ENCODE measurements at regions of chr2 and their contacts with region 1.

Region 1: GRCh38 chr2:84881581-84882414 is 914 bp upstream of the TRABD2A start:
- DNase-seq: peak; percentile 69 to 89 (median 85)
- ATAC-seq: peak; percentile 80
- H3K4me3 ChIP-seq: peak overlapping the region; percentile 80
- H3K4me3 Mint-ChIP-seq: peak overlapping the region; percentile 84 to 99 (median 97)
- H3K27ac ChIP-seq: peak overlapping the region; percentile 89
- H3K27ac Mint-ChIP-seq: peak overlapping the region; percentile 92 to 99 (median 98)
- H3K4me1 ChIP-seq: peaks cover 5 to 20% of the 10 kb centered on the region in 2 donors
- H3K4me1 Mint-ChIP-seq: peaks cover 35 to 65% (median 61%) of the 10 kb centered on the region in 7 donors
- H3K27me3 ChIP-seq: no peaks in the 10 kb centered on the region
- H3K27me3 Mint-ChIP-seq: peaks cover 0 to 3% (median 0%) of the 10 kb centered on the region in 5 donors

Region 2: DNA sequence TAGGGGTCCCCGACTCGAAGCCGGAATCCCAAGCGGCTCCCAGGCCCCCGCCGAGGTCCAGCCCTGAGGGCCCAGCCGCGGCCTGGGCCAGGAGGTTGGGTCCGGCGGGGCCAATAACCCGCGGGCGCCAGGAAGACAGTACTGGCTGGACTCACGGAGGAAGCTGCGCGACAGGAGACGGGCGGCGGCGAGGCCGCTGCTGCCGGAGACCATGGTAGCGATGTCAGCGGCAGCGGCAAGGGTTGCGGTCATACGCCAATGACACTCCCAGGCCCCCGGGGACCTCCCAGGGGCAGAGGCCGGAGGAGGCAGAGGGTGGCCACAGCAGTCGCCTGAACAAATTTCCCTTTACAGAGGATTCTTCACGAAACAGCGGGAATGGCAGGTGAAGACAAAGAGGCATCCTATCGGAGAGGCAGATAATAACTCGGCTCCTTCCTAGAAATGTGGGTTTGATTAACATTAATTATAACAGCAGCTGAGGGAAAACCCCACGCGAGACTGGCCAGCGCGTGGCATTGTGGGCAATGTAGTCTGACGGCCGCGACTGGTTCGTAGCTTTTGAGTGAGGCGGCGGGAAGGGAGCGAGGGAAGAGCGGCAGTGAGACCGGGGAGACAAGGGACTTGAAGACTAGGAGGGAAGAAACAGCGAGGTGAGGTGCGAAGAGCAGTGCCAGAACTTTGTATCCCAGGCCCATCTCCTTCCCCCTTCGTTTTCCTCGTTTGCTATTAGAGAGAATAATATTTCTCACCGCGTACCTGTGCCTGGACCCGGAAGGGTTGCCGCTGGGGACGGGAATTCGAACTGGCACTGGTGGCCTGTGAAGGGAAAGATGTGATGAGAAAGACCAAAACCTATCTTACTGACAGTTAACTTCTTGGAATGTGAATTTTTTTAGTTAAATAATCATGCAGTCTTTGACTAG is 422.5 kb before region 1 on chr2 and contains the start of gene SUCLG1:
- CTCF ChIA-PET with region 1: no interaction called
- POLR2A ChIA-PET with region 1: interaction called, 3 read pairs
- intact Hi-C with region 1: loop called (anchors 1 to 2 kb)
- DNase-seq: peak; percentile 72 to 88 (median 84)
- ATAC-seq: peak; percentile 98
- H3K4me3 ChIP-seq: peak within 1 kb of the TSS; percentile 69
- H3K4me3 Mint-ChIP-seq: peak within 1 kb of the TSS; percentile 90 to 100 (median 96)
- H3K27ac ChIP-seq: peak within 1 kb of the TSS; percentile 94
- H3K27ac Mint-ChIP-seq: peak within 1 kb of the TSS; percentile 91 to 99 (median 99)
- H3K4me1 ChIP-seq: peaks cover 9 to 24% of the 10 kb centered on the region in 2 donors
- H3K4me1 Mint-ChIP-seq: peaks cover 33 to 56% (median 50%) of the 10 kb centered on the region in 7 donors
- H3K27me3 ChIP-seq: no peaks in the 10 kb centered on the region
- H3K27me3 Mint-ChIP-seq: no peaks in the 10 kb centered on the region
- total RNA-seq, gene SUCLG1: 45.1 to 63.6 (median 47.9) TPM

Region 3: GRCh38 chr2:84526562-84526961 is 355.2 kb before region 1 on chr2:
- CTCF ChIA-PET with region 1: interaction called, 9 read pairs
- POLR2A ChIA-PET with region 1: interaction called, 6 read pairs
- intact Hi-C with region 1: loop called in 1 of 2 experiments (anchors 1 kb)
- DNase-seq: peak in 3 of 9 donors; percentile 32 to 45 (median 35)
- ATAC-seq: no peak
- H3K4me3 ChIP-seq: no peak overlapping the region
- H3K4me3 Mint-ChIP-seq: peak overlapping the region in 6 of 10 donors; percentile 17 to 46 (median 30)
- H3K27ac ChIP-seq: no peak overlapping the region
- H3K27ac Mint-ChIP-seq: peak overlapping the region in 8 of 9 donors; percentile 0 to 82 (median 53)
- H3K4me1 ChIP-seq: peaks cover 0 to 9% of the 10 kb centered on the region in 2 donors
- H3K4me1 Mint-ChIP-seq: peaks cover 2 to 36% (median 28%) of the 10 kb centered on the region in 7 donors
- H3K27me3 ChIP-seq: no peaks in the 10 kb centered on the region
- H3K27me3 Mint-ChIP-seq: peaks cover 0 to 16% (median 0%) of the 10 kb centered on the region in 5 donors

Region 4: GRCh38 chr2:84741296-84741765 is 140.5 kb before region 1 on chr2:
- CTCF ChIA-PET with region 1: interaction called, 4 read pairs
- POLR2A ChIA-PET with region 1: interaction called, 6 read pairs
- intact Hi-C with region 1: loop called in 1 of 2 experiments (anchors 1 kb)
- DNase-seq: peak in 8 of 9 donors; percentile 14 to 43 (median 28)
- ATAC-seq: peak; percentile 94
- H3K4me3 ChIP-seq: no peak overlapping the region
- H3K4me3 Mint-ChIP-seq: peak overlapping the region in 4 of 10 donors; percentile 5 to 30 (median 23)
- H3K27ac ChIP-seq: no peak overlapping the region
- H3K27ac Mint-ChIP-seq: peak overlapping the region in 6 of 9 donors; percentile 7 to 71 (median 38)
- H3K4me1 ChIP-seq: peaks cover 14 to 17% of the 10 kb centered on the region in 2 donors
- H3K4me1 Mint-ChIP-seq: peaks cover 12 to 75% (median 51%) of the 10 kb centered on the region in 7 donors
- H3K27me3 ChIP-seq: no peaks in the 10 kb centered on the region
- H3K27me3 Mint-ChIP-seq: peaks cover 0 to 21% (median 0%) of the 10 kb centered on the region in 5 donors

Region 5: GRCh38 chr2:84846041-84846663 is 35.6 kb before region 1 on chr2:
- CTCF ChIA-PET with region 1: interaction called, 14 read pairs
- POLR2A ChIA-PET with region 1: interaction called, 12 read pairs
- intact Hi-C with region 1: loop called (anchors 1 kb)
- DNase-seq: peak in 7 of 9 donors; percentile 68 to 89 (median 84)
- ATAC-seq: peak; percentile 85
- H3K4me3 ChIP-seq: peak overlapping the region; percentile 14
- H3K4me3 Mint-ChIP-seq: peak overlapping the region; percentile 72 to 87 (median 82)
- H3K27ac ChIP-seq: peak overlapping the region; percentile 80
- H3K27ac Mint-ChIP-seq: peak overlapping the region in 8 of 9 donors; percentile 94 to 99 (median 97)
- H3K4me1 ChIP-seq: peaks cover 93 to 98% of the 10 kb centered on the region in 2 donors
- H3K4me1 Mint-ChIP-seq: peaks cover 77 to 100% (median 92%) of the 10 kb centered on the region in 7 donors
- H3K27me3 ChIP-seq: no peaks in the 10 kb centered on the region
- H3K27me3 Mint-ChIP-seq: no peaks in the 10 kb centered on the region

Region 6: DNA sequence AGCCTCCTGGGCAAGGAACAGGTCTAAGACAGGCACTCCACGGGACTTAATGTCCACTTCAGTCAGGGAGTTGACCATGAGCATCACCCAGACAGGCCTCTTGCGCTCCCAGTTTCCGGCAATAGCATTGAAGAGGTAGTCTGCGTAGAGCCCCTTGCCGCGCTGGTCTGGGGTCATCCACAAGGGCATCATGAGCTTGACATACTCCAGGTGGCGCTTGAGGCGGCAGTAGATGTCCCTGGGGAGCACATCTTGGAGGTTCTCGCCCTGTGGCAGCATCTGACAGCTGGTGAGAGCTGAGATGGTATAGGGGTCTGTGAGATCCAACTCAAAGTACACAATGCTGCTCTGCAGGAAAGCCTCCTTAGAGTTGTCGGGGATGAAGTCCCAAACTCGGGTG is 11.5 kb before region 1 on chr2:
- CTCF ChIA-PET with region 1: interaction called, 9 read pairs
- POLR2A ChIA-PET with region 1: interaction called, 77 read pairs
- intact Hi-C with region 1: loop called (anchors 1 to 2 kb)
- DNase-seq: no peak
- ATAC-seq: no peak
- H3K4me3 ChIP-seq: no peak overlapping the region
- H3K4me3 Mint-ChIP-seq: peak overlapping the region; percentile 15 to 89 (median 68)
- H3K27ac ChIP-seq: peak overlapping the region; percentile 24
- H3K27ac Mint-ChIP-seq: peak overlapping the region in 8 of 9 donors; percentile 33 to 98 (median 92)
- H3K4me1 ChIP-seq: peaks cover 2 to 75% of the 10 kb centered on the region in 2 donors
- H3K4me1 Mint-ChIP-seq: peaks cover 34 to 97% (median 87%) of the 10 kb centered on the region in 7 donors
- H3K27me3 ChIP-seq: no peaks in the 10 kb centered on the region
- H3K27me3 Mint-ChIP-seq: no peaks in the 10 kb centered on the region

Region 7: GRCh38 chr2:85017411-85018048 is 135.7 kb after region 1 on chr2:
- CTCF ChIA-PET with region 1: no interaction called
- POLR2A ChIA-PET with region 1: no interaction called
- intact Hi-C with region 1: loop called in 1 of 2 experiments (anchors 1 kb)
- DNase-seq: peak in 4 of 9 donors; percentile 17 to 30 (median 24)
- ATAC-seq: no peak
- H3K4me3 ChIP-seq: no peak overlapping the region
- H3K4me3 Mint-ChIP-seq: peak overlapping the region in 4 of 10 donors; percentile 5 to 39 (median 32)
- H3K27ac ChIP-seq: no peak overlapping the region
- H3K27ac Mint-ChIP-seq: peak overlapping the region in 8 of 9 donors; percentile 8 to 67 (median 38)
- H3K4me1 ChIP-seq: peaks cover 2 to 15% of the 10 kb centered on the region in 2 donors
- H3K4me1 Mint-ChIP-seq: peaks cover 41 to 78% (median 66%) of the 10 kb centered on the region in 7 donors
- H3K27me3 ChIP-seq: no peaks in the 10 kb centered on the region
- H3K27me3 Mint-ChIP-seq: no peaks in the 10 kb centered on the region

Region 8: GRCh38 chr2:85307527-85307897 is 425.7 kb after region 1 on chr2:
- CTCF ChIA-PET with region 1: no interaction called
- POLR2A ChIA-PET with region 1: no interaction called
- intact Hi-C with region 1: no loop called
- DNase-seq: no peak
- ATAC-seq: peak; percentile 1
- H3K4me3 ChIP-seq: peak overlapping the region; percentile 50
- H3K4me3 Mint-ChIP-seq: peak overlapping the region; percentile 35 to 93 (median 80)
- H3K27ac ChIP-seq: peak overlapping the region; percentile 60
- H3K27ac Mint-ChIP-seq: peak overlapping the region in 8 of 9 donors; percentile 78 to 97 (median 94)
- H3K4me1 ChIP-seq: peaks cover 11 to 31% of the 10 kb centered on the region in 2 donors
- H3K4me1 Mint-ChIP-seq: peaks cover 28 to 51% (median 48%) of the 10 kb centered on the region in 7 donors
- H3K27me3 ChIP-seq: no peaks in the 10 kb centered on the region
- H3K27me3 Mint-ChIP-seq: peaks cover 0 to 11% (median 0%) of the 10 kb centered on the region in 5 donors

Measured in naive thymus-derived CD4-positive, alpha-beta T cell (primary cell).